Common myeloid progenitor, CD34-positive (primary cell): ENCODE measurements at regions of chr7 and their contacts with region 1.

Region 1: GRCh38 chr7:158695726-158696452 is 8.7 kb downstream of the NCAPG2 start:
- DNase-seq: peak; percentile 90 to 95 (median 94)
- H3K4me3 ChIP-seq: peak overlapping the region in 2 of 7 experiments; percentile 23 to 61
- H3K27ac ChIP-seq: no peak overlapping the region
- H3K4me1 ChIP-seq: peaks cover 0 to 23% (median 17%) of the 10 kb centered on the region in 4 experiments
- H3K27me3 ChIP-seq: no peaks in the 10 kb centered on the region

Region 2: DNA sequence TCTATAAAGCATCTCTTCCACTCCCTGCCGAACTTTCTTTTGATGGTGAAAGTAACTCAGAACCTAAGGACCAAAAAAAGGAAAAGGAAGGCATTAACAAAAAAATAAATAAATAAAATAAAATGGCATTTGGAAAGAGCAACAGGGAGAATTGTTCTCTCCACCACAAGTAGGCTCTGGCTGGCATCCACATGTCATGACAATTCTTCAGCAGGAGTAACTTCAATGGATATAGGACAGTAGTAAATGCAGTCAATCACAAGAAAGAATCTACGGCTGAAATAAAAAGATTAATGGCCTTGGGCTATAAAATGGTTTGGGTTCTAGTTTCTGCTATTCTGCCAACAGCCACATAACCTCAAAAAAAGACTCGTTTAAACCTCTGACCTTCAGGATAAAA is 15.1 kb before region 1 on chr7:
- CTCF ChIA-PET with region 1: no interaction called
- POLR2A ChIA-PET with region 1: no interaction called
- DNase-seq: no peak
- H3K4me3 ChIP-seq: no peak overlapping the region
- H3K27ac ChIP-seq: no peak overlapping the region
- H3K4me1 ChIP-seq: peaks cover 0 to 3% (median 0%) of the 10 kb centered on the region in 4 experiments
- H3K27me3 ChIP-seq: no peaks in the 10 kb centered on the region

Region 3: GRCh38 chr7:158710651-158711102 is 14.8 kb after region 1 on chr7:
- CTCF ChIA-PET with region 1: interaction called, 15 read pairs
- POLR2A ChIA-PET with region 1: no interaction called
- DNase-seq: peak; percentile 84 to 91 (median 89)
- H3K4me3 ChIP-seq: peak overlapping the region in 2 of 7 experiments; percentile 28 to 52
- H3K27ac ChIP-seq: no peak overlapping the region
- H3K4me1 ChIP-seq: peaks cover 0 to 24% (median 16%) of the 10 kb centered on the region in 4 experiments
- H3K27me3 ChIP-seq: no peaks in the 10 kb centered on the region

Region 4: DNA sequence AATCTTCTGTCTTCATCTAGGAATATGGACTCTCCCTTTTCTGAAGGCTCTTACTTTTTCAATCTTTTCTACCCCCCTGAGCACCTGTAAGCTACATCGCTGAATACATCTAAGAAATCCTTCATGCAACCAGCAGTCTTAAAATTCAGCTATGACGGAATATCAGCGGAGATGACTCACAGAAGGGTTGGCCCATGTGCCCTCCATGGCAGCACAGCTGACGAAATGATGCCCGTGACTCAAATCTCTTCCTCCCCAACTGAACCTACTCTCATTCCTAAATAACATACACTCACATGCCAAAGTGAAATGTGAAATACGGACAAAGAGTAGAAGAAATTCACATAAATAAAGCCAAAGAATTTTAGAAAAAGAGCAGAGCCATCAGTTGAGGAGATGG is 39.0 kb after region 1 on chr7:
- CTCF ChIA-PET with region 1: interaction called, 57 read pairs
- POLR2A ChIA-PET with region 1: no interaction called
- DNase-seq: no peak
- H3K4me3 ChIP-seq: no peak overlapping the region
- H3K27ac ChIP-seq: no peak overlapping the region
- H3K4me1 ChIP-seq: peaks cover 0 to 4% (median 4%) of the 10 kb centered on the region in 4 experiments
- H3K27me3 ChIP-seq: no peaks in the 10 kb centered on the region

Region 5: GRCh38 chr7:158740013-158740656 is 44.2 kb after region 1 on chr7:
- CTCF ChIA-PET with region 1: interaction called, 57 read pairs
- POLR2A ChIA-PET with region 1: no interaction called
- DNase-seq: peak; percentile 31 to 87 (median 78)
- H3K4me3 ChIP-seq: peak overlapping the region in 2 of 7 experiments; percentile 0 to 10
- H3K27ac ChIP-seq: peak overlapping the region in 1 of 2 experiments; percentile 12
- H3K4me1 ChIP-seq: peaks cover 0 to 20% (median 13%) of the 10 kb centered on the region in 4 experiments
- H3K27me3 ChIP-seq: no peaks in the 10 kb centered on the region

Region 6: GRCh38 chr7:158976849-158977593 is 281.1 kb after region 1 on chr7:
- CTCF ChIA-PET with region 1: interaction called, 29 read pairs
- POLR2A ChIA-PET with region 1: no interaction called
- DNase-seq: peak; percentile 88 to 91 (median 89)
- H3K4me3 ChIP-seq: peak overlapping the region; percentile 23 to 86 (median 56)
- H3K27ac ChIP-seq: no peak overlapping the region
- H3K4me1 ChIP-seq: peaks cover 0 to 15% (median 13%) of the 10 kb centered on the region in 4 experiments
- H3K27me3 ChIP-seq: no peaks in the 10 kb centered on the region